WTC11 (cell line): ENCODE measurements at regions of chr2 and their contacts with region 1.

Region 1: DNA sequence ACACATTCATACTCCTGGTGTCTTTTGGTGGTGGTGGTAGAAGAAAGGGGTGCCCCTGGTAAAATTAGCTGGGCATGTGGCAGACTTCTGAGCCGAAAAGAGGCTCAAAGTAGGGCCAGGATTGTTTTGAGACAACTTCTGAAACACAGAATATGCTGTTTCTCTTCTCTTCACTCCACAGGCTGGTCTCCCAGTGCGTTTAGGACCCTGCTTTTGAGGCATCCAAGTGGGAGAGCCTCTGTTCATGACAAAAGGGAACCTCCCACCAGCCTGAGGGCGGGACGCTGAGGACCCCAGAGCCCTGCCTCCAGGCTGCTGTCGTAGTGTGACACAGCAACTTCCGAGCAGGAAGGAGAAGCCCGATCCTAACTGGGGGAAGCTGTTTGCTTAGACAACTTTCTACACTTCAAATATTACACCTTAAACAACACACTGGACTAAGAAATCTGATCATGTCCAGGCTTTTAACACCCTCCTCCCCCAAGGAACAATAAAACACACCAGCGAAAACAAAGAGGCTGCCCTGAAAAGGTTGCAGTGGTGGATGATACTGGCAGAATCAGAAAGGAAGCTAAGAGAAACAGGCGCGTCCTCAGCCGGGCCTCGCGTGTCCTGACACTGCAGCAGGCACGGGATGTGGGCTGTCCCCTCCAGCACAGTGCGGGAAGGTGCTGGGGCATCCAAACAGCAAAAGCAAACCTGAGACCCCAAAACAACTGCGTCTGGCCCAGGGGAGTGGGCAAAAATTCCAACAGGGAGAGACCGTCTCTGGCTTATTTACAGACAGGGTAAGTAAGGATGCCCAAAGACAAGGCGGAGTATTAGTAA is 9.3 kb downstream of the SERTAD2 start:
- DNase-seq: peak; percentile 81
- ATAC-seq: peak; percentile 85
- H3K4me3 Mint-ChIP-seq: peak overlapping the region; percentile 84
- H3K27ac Mint-ChIP-seq: peak overlapping the region; percentile 99
- H3K4me1 Mint-ChIP-seq: peaks cover 80% of the 10 kb centered on the region
- H3K27me3 Mint-ChIP-seq: peaks cover 26% of the 10 kb centered on the region
- CTCF ChIP-seq: no peak

Region 2: GRCh38 chr2:64622443-64623241 is 21.7 kb before region 1 on chr2:
- CTCF ChIA-PET with region 1: interaction called, 22 read pairs
- POLR2A ChIA-PET with region 1: no interaction called
- DNase-seq: peak; percentile 32
- ATAC-seq: peak; percentile 51
- H3K4me3 Mint-ChIP-seq: no peak overlapping the region
- H3K27ac Mint-ChIP-seq: peak overlapping the region; percentile 88; the same call in 1 of the 2 replicates
- H3K4me1 Mint-ChIP-seq: peaks cover 50% of the 10 kb centered on the region
- H3K27me3 Mint-ChIP-seq: peaks cover 6% of the 10 kb centered on the region
- CTCF ChIP-seq: no peak

Region 3: DNA sequence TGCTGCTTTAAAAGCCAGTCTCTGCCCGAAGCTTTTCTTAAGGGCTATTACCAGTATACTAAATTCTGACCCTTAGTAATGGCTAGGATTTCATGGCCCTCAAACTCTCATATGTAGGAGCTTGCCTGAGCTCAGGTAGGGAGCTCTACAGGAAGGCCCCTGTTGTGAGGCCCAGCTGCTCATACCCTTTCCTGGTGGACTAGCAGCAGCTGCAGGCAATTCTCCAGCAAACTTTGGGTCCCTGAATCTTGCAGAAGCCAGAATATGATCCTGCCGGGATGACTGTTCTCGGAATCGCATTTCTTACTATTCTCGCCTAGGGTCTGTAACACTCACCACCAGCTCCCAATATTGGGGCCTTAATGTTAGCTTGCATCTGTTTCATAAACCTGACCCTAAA is 115.7 kb after region 1 on chr2:
- CTCF ChIA-PET with region 1: interaction called, 12 read pairs
- POLR2A ChIA-PET with region 1: no interaction called
- DNase-seq: no peak
- ATAC-seq: peak; percentile 48
- H3K4me3 Mint-ChIP-seq: no peak overlapping the region
- H3K27ac Mint-ChIP-seq: no peak overlapping the region
- H3K4me1 Mint-ChIP-seq: peaks cover 5% of the 10 kb centered on the region; the same call in 1 of the 2 replicates
- H3K27me3 Mint-ChIP-seq: peaks cover 8% of the 10 kb centered on the region
- CTCF ChIP-seq: no peak

Region 4: DNA sequence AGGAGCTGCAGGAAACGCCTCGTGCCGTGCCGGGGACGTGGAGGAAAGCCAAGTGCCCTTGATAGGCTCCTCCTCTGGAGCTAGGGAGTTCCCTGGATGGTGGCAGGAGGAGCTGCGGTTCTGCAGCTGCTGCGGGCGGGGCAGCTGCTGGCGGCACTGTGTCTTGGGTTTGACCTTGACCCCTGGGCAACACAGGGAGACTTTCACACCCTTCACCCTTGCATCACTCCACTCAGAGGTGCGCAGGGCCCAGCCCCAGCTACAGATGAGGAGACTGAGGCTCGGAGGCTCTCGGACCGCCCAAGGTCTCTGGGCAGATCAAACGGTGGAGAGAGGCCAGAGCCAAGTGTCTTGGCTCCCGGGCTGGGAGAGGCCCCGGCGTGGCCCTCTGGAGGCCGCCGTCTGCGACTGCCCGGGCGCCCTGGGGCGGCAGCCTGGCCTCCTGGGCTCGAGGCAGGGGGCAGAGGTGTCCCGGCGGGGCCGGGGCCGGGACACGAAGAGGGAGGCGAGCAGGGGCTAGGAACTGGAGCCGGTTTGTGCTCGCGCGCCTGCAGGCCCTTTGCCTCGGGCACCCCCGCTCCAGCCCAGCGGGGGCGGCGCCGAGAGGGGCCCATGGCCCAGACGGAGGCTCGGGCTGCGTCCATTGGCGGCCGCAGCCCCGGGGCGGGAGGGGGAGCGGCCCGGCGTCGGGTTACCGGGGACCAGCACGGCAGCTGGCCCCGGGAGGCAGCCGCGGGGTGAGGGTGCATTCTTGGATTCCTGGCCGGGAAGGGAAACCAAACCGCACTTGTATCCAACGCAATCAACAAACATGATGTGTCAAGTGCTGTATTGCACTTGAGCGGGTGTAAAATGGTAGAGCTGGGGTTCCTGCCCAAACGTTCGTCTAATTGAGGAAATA is 215.2 kb after region 1 on chr2:
- CTCF ChIA-PET with region 1: interaction called, 33 read pairs
- POLR2A ChIA-PET with region 1: interaction called, 7 read pairs
- DNase-seq: peak; percentile 72
- ATAC-seq: peak; percentile 71
- H3K4me3 Mint-ChIP-seq: peak overlapping the region; percentile 72
- H3K27ac Mint-ChIP-seq: no peak overlapping the region
- H3K4me1 Mint-ChIP-seq: peaks cover 20% of the 10 kb centered on the region
- H3K27me3 Mint-ChIP-seq: peaks cover 27% of the 10 kb centered on the region
- CTCF ChIP-seq: no peak

Region 5: DNA sequence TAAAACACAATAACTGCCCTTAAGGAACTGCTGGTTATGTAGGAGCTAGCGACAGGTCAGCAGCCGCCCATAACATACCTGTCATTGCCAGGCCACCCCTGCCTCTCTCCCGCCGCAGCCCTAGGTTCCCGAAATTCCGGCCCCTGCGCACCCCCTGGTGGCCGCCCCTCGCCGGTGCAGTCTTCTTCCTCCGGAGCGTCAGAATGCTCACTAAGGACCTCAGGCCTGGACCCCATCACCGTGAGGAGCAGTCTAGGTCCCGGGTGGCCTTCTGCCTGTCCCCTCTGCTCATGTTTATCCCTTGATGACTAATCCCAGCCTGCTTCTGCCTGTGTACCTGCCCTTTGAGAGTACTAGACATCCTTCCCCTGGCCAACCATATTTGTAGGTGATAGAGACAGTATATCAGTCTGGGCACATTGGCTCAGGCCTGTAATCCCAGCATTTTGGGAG is 229.1 kb after region 1 on chr2:
- CTCF ChIA-PET with region 1: interaction called, 21 read pairs
- POLR2A ChIA-PET with region 1: no interaction called
- DNase-seq: peak; percentile 92
- ATAC-seq: peak; percentile 93
- H3K4me3 Mint-ChIP-seq: no peak overlapping the region
- H3K27ac Mint-ChIP-seq: peak overlapping the region; percentile 79; the same call in 1 of the 2 replicates
- H3K4me1 Mint-ChIP-seq: peaks cover 17% of the 10 kb centered on the region
- H3K27me3 Mint-ChIP-seq: no peaks in the 10 kb centered on the region
- CTCF ChIP-seq: peak; percentile 97